ENCODE measurements at regions of chr5 and their contacts with region 1.

Region 1: DNA sequence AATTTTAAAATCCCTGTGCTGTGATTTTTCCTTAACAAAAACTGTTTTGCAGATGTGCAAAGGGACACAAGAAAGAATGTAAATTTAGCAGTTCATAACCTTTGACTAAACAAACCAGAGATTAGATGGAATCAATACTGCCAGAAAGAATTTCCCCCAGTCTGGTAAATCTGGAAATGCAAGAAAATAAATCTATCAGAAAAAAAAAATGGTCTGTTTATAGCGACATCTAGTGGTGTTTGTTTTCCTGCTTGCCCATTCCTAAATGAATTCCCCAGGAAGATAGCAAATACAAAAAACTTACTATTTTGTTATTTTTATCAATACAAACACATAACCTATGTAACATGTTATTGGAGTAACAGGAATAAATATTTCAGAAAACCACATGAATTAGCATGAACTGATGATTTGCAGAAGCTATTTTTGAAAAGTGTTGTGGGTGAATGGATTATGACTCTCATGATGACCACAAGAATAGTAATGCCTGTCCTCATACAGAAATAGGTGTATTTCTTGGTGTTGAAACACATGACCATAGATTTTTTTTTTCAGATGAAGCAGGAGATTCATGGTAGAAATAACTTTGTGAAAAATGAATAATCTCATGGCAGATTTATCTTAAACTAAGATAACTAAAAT is 1703.8 kb downstream of the MAT2B start:
- DNase-seq: no peak
- ATAC-seq: no peak
- H3K4me3 ChIP-seq: no peak overlapping the region
- H3K27ac ChIP-seq: no peak overlapping the region
- H3K4me1 ChIP-seq: no peaks in the 10 kb centered on the region
- H3K27me3 ChIP-seq: no peaks in the 10 kb centered on the region
- CTCF ChIP-seq: peak in 3 of 5 experiments; percentile 14 to 47 (median 24)
- POLR2A ChIP-seq: no peak

Region 2: GRCh38 chr5:163564321-163564938 is 1644.8 kb before region 1 on chr5:
- in situ Hi-C with region 1: loop called in 2 of 4 experiments (anchors 25 kb)
- intact Hi-C with region 1: no loop called
- DNase-seq: peak in 1 of 2 donors; percentile 21
- ATAC-seq: no peak
- H3K4me3 ChIP-seq: no peak overlapping the region
- H3K27ac ChIP-seq: no peak overlapping the region
- H3K4me1 ChIP-seq: peaks cover 9 to 12% of the 10 kb centered on the region in 2 donors
- H3K27me3 ChIP-seq: peaks cover 24 to 30% (median 26%) of the 10 kb centered on the region in 3 donors
- CTCF ChIP-seq: peak; percentile 70 to 87 (median 79)
- POLR2A ChIP-seq: no peak

Region 3: GRCh38 chr5:163585206-163585605 is 1624.0 kb before region 1 on chr5:
- in situ Hi-C with region 1: loop called in 1 of 4 experiments (anchors 25 kb)
- intact Hi-C with region 1: no loop called
- DNase-seq: no peak
- ATAC-seq: no peak
- H3K4me3 ChIP-seq: no peak overlapping the region
- H3K27ac ChIP-seq: no peak overlapping the region
- H3K4me1 ChIP-seq: no peaks in the 10 kb centered on the region
- H3K27me3 ChIP-seq: no peaks in the 10 kb centered on the region
- CTCF ChIP-seq: no peak
- POLR2A ChIP-seq: no peak

Region 4: GRCh38 chr5:164013077-164013670 is 1196.0 kb before region 1 on chr5:
- in situ Hi-C with region 1: loop called in 1 of 4 experiments (anchors 25 kb)
- intact Hi-C with region 1: no loop called
- DNase-seq: no peak
- ATAC-seq: no peak
- H3K4me3 ChIP-seq: no peak overlapping the region
- H3K27ac ChIP-seq: no peak overlapping the region
- H3K4me1 ChIP-seq: no peaks in the 10 kb centered on the region
- H3K27me3 ChIP-seq: no peaks in the 10 kb centered on the region
- CTCF ChIP-seq: peak in 4 of 5 experiments; percentile 32 to 52 (median 44)
- POLR2A ChIP-seq: no peak

Region 5: GRCh38 chr5:164860896-164861295 is 348.3 kb before region 1 on chr5:
- in situ Hi-C with region 1: no loop called
- intact Hi-C with region 1: no loop called
- DNase-seq: no peak
- ATAC-seq: no peak
- H3K4me3 ChIP-seq: no peak overlapping the region
- H3K27ac ChIP-seq: no peak overlapping the region
- H3K4me1 ChIP-seq: no peaks in the 10 kb centered on the region
- H3K27me3 ChIP-seq: no peaks in the 10 kb centered on the region
- CTCF ChIP-seq: no peak
- POLR2A ChIP-seq: no peak

Region 6: DNA sequence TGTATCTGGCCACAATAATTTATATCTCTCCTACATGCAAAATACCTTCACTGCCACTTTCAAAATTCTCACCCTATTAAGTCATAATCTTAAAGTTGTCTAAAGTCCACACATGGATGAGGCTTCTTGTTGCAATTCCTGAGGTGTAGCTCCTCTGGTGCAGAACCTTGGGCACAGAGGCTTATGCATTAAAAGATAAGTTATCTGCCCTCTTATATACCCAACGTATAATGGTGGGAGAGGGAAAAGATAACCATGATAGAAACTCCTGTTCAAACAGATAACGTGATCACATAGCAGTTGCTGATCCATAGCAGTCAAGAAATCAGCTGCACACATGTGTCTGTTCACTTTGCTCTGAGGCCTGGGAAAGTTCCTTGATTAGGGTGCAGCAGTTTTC is 63.2 kb after region 1 on chr5:
- in situ Hi-C with region 1: no loop called
- intact Hi-C with region 1: no loop called
- DNase-seq: no peak
- ATAC-seq: no peak
- H3K4me3 ChIP-seq: no peak overlapping the region
- H3K27ac ChIP-seq: no peak overlapping the region
- H3K4me1 ChIP-seq: no peaks in the 10 kb centered on the region
- H3K27me3 ChIP-seq: no peaks in the 10 kb centered on the region
- CTCF ChIP-seq: no peak
- POLR2A ChIP-seq: no peak